Breast epithelium (tissue), 4 donors: ENCODE measurements at regions of chr1 and their contacts with region 1.

Region 1: GRCh38 chr1:15598436-15598835 is 13.6 kb upstream of the AGMAT start:
- DNase-seq: no peak
- H3K4me3 ChIP-seq: no peak overlapping the region
- H3K27ac ChIP-seq: no peak overlapping the region
- H3K4me1 ChIP-seq: no peaks in the 10 kb centered on the region
- H3K27me3 ChIP-seq: no peaks in the 10 kb centered on the region
- CTCF ChIP-seq: no peak
- POLR2A ChIP-seq: no peak

Region 2: DNA sequence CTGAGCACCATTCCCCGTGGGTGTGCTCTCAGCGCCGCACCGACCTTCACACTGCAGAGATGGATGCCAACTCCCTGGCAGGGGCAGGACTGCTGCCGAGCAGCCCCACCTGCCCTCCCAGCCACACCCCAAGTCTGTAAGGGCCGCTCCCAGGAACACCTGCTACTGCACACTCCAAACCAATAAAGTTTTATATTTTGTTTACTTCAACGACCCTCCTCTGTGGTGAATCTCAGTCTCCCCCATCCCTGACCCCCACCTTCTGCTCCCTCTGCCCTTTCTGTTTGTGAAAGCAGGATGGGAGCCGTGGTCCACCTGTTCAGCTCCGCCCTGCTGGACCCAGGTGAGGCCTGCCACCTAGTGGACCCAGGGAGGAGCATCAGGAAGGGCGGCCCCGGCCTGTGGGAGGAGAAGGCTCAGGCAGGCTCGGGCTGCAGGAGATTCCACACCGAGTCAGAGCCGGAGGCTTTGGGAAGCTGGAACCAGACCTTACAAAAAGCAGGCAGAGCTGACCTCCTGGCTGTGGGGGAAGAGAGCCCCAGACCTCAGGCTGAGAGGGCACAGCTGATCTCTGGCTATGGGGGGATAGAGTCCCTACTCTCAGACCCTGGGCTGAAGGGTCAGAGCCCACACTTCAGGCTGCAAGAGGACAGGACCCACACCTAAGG is 142.9 kb after region 1 on chr1:
- intact Hi-C with region 1: loop called (anchors 10 kb)
- DNase-seq: peak; percentile 79 to 86
- H3K4me3 ChIP-seq: no peak overlapping the region
- H3K27ac ChIP-seq: no peak overlapping the region
- H3K4me1 ChIP-seq: no peaks in the 10 kb centered on the region
- H3K27me3 ChIP-seq: no peaks in the 10 kb centered on the region
- CTCF ChIP-seq: peak; percentile 79 to 93 (median 84)
- POLR2A ChIP-seq: no peak